ENCODE measurements at regions of chr9 and their contacts with region 1.

Region 1: DNA sequence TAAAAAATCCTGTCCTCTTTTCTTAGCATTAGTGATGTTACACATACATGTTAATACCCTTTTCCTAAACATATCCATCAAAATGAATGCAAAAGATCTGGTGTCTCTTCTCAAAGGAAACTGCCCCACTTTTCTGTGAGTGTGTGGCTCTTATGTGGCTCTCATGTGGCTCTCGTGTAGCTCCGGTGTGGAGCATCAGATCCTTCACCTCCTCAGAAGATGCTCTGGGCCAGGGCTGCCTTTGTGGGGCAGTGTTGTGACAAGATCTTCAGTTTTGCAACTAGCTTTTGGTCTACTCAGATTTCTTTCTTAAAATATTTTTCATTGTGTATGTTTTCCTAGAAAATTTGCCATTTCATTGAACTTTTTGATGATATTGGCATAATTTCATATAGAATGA is 19.3 kb downstream of the GARNL3 start:
- DNase-seq: no peak
- ATAC-seq: no peak
- H3K4me3 ChIP-seq: no peak overlapping the region
- H3K27ac ChIP-seq: peak overlapping the region in 1 of 12 donors; percentile 49
- H3K4me1 ChIP-seq: peaks cover 0 to 48% (median 7%) of the 10 kb centered on the region in 12 donors
- H3K27me3 ChIP-seq: no peaks in the 10 kb centered on the region
- CTCF ChIP-seq: peak in 8 of 12 donors; percentile 21 to 61 (median 38)
- POLR2A ChIP-seq: no peak

Region 2: DNA sequence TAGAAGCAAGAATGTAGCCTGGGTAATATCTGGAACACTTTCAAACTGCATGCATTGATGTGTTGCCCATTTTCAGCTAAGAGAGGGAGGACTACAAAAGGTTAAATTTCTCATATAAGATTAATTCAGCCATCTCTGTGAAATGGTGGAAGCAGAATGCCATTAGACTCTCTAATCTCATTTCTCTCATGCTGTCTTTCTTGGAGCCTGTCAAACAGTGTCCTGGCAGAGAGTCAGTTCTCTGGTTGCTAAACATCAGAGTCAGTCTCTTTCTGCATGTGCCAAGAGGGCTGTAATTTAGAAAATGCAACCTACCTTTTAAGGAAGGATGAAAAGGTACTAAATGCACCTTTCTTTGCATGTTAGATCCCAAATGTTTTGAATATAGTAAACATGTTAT is 20.3 kb before region 1 on chr9:
- intact Hi-C with region 1: loop called in 1 of 10 experiments (anchors 1 kb)
- DNase-seq: peak in 2 of 5 donors; percentile 39 to 40
- ATAC-seq: peak; percentile 52 to 76 (median 70)
- H3K4me3 ChIP-seq: peak overlapping the region in 7 of 12 donors; percentile 31 to 57 (median 47)
- H3K27ac ChIP-seq: peak overlapping the region in 10 of 12 donors; percentile 8 to 86 (median 57)
- H3K4me1 ChIP-seq: peaks cover 0 to 40% (median 13%) of the 10 kb centered on the region in 12 donors
- H3K27me3 ChIP-seq: no peaks in the 10 kb centered on the region
- CTCF ChIP-seq: no peak
- POLR2A ChIP-seq: no peak

Region 3: GRCh38 chr9:127612939-127613582 is 329.1 kb after region 1 on chr9:
- intact Hi-C with region 1: no loop called
- DNase-seq: peak; percentile 83 to 87 (median 86)
- ATAC-seq: peak; percentile 56 to 85 (median 68)
- H3K4me3 ChIP-seq: peak overlapping the region; percentile 45 to 99 (median 91)
- H3K27ac ChIP-seq: peak overlapping the region in 11 of 12 donors; percentile 38 to 98 (median 95)
- H3K4me1 ChIP-seq: peaks cover 0 to 37% (median 28%) of the 10 kb centered on the region in 12 donors
- H3K27me3 ChIP-seq: peaks cover 0 to 5% (median 0%) of the 10 kb centered on the region in 9 donors
- CTCF ChIP-seq: peak in 1 of 12 donors; percentile 11
- POLR2A ChIP-seq: peak in 1 of 2 donors; percentile 67

Measured in heart left ventricle (tissue), 16 donors.